B cell (primary cell): ENCODE measurements at regions of chr20 and their contacts with region 1.

Region 1: DNA sequence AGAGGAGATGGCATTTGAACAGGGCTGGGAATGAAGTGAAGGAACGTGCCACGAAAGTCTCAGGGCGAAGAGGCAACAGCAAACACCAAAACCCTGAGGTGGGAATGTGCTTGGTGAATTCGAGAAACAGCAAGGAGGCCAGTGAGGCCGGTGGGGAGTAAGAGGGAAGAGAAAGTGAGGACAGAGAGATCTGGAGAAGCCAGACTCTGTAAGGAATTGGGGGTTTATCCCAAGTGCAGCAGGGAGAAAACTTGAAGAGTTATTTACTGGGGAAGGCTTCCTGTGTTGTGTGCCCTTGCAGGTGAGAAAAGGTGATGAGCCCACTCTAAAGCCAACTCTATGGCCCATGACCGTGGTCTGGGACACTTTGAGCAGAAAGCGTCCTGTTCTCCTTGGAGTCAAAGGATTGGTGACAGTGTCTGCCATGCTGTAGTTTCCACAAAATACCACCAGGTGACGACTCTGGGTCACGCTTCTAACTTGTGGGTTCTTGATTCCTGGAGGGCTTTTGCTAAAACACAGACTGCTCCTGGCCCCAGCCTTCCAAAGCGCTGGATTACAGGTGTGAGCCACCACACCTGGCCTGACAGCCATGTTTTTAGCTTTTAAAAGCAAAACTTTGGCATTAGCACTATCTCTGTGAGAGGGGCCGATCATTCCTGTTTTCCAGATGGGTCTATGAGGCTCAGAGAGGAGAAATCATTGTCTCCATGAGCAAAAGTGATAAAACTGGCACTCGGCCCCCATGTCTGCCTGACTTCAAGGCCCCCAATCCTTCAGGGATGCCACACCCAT is 18.0 kb upstream of the CSNK2A1 start:
- DNase-seq: peak; percentile 50
- ATAC-seq: peak; percentile 41
- H3K4me3 ChIP-seq: no peak overlapping the region
- H3K4me3 Mint-ChIP-seq: no peak overlapping the region
- H3K27ac ChIP-seq: no peak overlapping the region
- H3K27ac Mint-ChIP-seq: no peak overlapping the region
- H3K4me1 ChIP-seq: peaks cover 0 to 2% of the 10 kb centered on the region in 2 donors
- H3K4me1 Mint-ChIP-seq: no peaks in the 10 kb centered on the region
- H3K27me3 ChIP-seq: peaks cover 0 to 4% (median 1%) of the 10 kb centered on the region in 4 experiments
- H3K27me3 Mint-ChIP-seq: peaks cover 14% of the 10 kb centered on the region
- CTCF ChIP-seq: peak; percentile 76

Region 2: GRCh38 chr20:610130-611046 is 48.8 kb after region 1 on chr20 and contains the start of gene TCF15:
- CTCF ChIA-PET with region 1: no interaction called
- POLR2A ChIA-PET with region 1: no interaction called
- intact Hi-C with region 1: no loop called
- DNase-seq: no peak
- ATAC-seq: no peak
- H3K4me3 ChIP-seq: no peak within 1 kb of the TSS
- H3K4me3 Mint-ChIP-seq: peak within 1 kb of the TSS; percentile 26
- H3K27ac ChIP-seq: no peak within 1 kb of the TSS
- H3K27ac Mint-ChIP-seq: no peak within 1 kb of the TSS
- H3K4me1 ChIP-seq: peaks cover 3 to 5% of the 10 kb centered on the region in 2 donors
- H3K4me1 Mint-ChIP-seq: peaks cover 10% of the 10 kb centered on the region
- H3K27me3 ChIP-seq: peaks cover 0 to 61% (median 17%) of the 10 kb centered on the region in 4 experiments
- H3K27me3 Mint-ChIP-seq: peaks cover 52% of the 10 kb centered on the region
- CTCF ChIP-seq: no peak
- total RNA-seq, gene TCF15: not detected in 2 replicates

Region 3: DNA sequence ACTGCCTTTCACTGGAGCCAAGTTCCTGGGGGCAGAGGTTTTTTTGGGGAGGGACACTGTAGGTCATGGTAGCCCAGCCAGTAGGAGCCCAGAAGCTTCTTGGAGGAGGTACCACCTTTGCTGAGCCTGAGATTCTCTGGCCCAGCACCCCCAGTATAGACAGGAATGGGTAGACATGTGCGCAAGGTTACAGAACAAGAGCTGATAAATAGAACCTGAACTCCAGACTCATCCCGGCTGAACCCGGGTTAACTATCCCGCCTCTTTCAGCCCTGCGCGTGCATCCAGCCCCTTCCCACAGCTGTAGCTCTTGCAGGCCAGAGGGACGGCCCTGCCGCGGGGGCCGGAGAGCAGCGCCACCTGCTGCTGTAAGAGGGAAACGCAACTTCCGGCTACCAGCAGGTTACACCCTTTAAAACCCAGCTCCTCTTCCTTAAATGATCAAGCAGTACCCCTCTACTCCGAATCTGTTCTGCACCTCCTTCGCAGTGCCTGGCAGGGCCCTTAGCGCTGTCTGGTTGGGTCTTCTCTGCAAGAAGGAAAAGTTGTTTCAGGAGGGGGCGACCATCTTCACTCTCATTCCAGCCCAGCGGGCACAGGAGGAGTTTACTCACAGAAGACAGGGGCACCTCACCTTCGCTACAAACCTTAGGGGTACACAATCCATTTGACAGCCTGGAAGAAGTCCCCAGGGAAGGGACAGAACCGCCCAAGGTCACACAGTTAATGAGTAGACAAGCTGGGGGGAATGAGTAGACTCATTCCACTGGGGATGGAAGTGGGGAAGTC is 83.9 kb after region 1 on chr20:
- CTCF ChIA-PET with region 1: interaction called, 13 read pairs
- POLR2A ChIA-PET with region 1: no interaction called
- intact Hi-C with region 1: loop called (anchors 1 kb)
- DNase-seq: peak; percentile 77
- ATAC-seq: peak; percentile 84
- H3K4me3 ChIP-seq: no peak overlapping the region
- H3K4me3 Mint-ChIP-seq: no peak overlapping the region
- H3K27ac ChIP-seq: no peak overlapping the region
- H3K27ac Mint-ChIP-seq: no peak overlapping the region
- H3K4me1 ChIP-seq: peaks cover 7 to 11% of the 10 kb centered on the region in 2 donors
- H3K4me1 Mint-ChIP-seq: peaks cover 8% of the 10 kb centered on the region
- H3K27me3 ChIP-seq: peaks cover 0 to 23% (median 9%) of the 10 kb centered on the region in 4 experiments
- H3K27me3 Mint-ChIP-seq: peaks cover 23% of the 10 kb centered on the region
- CTCF ChIP-seq: peak; percentile 97

Region 4: DNA sequence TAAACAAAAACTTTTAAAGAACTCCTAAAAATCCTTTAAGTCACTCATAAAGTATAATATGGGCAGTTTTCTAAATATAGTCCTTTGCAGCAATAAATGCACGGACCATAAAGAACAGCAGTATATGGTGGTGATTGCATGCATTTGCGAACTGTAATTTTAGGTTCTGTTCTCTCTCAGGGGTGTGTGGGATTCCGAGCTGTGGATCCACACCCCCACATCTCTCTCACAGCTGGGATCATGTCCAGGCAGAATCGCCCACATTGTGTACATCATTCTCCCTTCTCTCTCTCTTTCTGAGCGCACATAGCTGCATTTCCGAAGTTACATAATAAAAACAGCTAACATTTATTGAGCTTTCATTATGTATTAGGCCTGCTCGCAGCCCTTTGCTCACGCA is 178.1 kb after region 1 on chr20:
- CTCF ChIA-PET with region 1: interaction called, 10 read pairs
- POLR2A ChIA-PET with region 1: no interaction called
- intact Hi-C with region 1: loop called (anchors 2 kb)
- DNase-seq: no peak
- ATAC-seq: no peak
- H3K4me3 ChIP-seq: no peak overlapping the region
- H3K4me3 Mint-ChIP-seq: no peak overlapping the region
- H3K27ac ChIP-seq: no peak overlapping the region
- H3K27ac Mint-ChIP-seq: no peak overlapping the region
- H3K4me1 ChIP-seq: no peaks in the 10 kb centered on the region
- H3K4me1 Mint-ChIP-seq: no peaks in the 10 kb centered on the region
- H3K27me3 ChIP-seq: peaks cover 0 to 3% (median 0%) of the 10 kb centered on the region in 4 experiments
- H3K27me3 Mint-ChIP-seq: peaks cover 15% of the 10 kb centered on the region
- CTCF ChIP-seq: no peak